Right ventricle myocardium inferior (tissue), 1 donor: ENCODE measurements at regions of chr10 and their contacts with region 1.

Region 1: GRCh38 chr10:44864637-44865288 is 46.4 kb upstream of the TMEM72 start:
- DNase-seq: peak; percentile 94
- ATAC-seq: peak; percentile 96

Region 2: GRCh38 chr10:43671656-43672531 is 1192.9 kb before region 1 on chr10:
- intact Hi-C with region 1: loop called (anchors 2 kb)
- DNase-seq: peak; percentile 9
- ATAC-seq: peak; percentile 46

Region 3: GRCh38 chr10:44801383-44802327 is 63.1 kb before region 1 on chr10:
- intact Hi-C with region 1: no loop called
- DNase-seq: peak; percentile 92
- ATAC-seq: peak; percentile 89